Heart right ventricle (tissue), 16 donors: ENCODE measurements at regions of chr11 and their contacts with region 1.

Region 1: DNA sequence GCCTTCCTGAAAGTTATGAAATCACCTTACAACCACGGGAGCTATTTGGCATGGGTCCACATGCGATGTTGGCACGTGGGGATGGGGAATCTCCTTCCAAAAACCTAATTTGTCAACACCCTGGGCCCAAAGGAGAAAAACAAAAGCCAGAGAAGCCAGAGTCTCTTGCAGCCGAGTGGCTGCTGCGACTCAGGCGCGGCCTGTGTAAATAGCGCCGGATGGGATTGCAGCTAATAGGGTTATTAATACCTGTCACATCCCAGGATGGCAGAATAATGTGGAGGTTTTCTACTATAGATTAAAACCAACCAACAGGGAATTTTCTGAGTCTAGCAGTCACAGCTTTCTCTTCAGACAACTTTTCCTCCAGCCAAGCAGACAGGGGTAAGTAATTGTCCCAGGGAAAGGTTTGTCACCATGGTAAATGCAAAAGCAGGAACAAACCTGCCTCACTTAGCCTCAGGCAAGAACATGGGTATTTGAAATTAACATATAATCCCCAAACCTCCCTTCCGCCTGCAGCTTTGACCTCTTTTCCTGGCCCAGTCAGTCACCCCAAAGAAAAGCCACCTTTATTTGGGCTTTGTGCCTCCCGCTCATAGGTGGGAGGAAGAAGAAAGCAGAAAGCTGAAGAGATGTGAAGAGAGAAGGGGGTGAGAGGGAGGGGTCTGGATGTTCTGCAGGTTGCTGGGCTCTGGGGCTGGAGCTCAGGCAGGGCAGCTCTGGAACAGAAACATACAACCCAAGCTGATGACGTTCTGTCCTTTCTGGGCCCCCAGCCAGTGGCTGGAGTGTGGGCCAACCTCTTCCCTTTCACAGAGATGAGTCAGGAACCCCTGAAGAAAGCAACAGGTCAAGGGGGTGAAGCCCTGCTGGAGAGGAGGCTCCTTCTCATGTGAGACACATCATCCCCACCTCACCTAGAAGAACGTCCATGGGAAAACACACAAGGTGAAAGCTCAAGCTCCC is 376.5 kb downstream of the NXPE2 start:
- DNase-seq: peak; percentile 10 to 44
- ATAC-seq: peak in 6 of 8 donors; percentile 38 to 95 (median 86)
- H3K4me3 ChIP-seq: no peak overlapping the region
- H3K27ac ChIP-seq: no peak overlapping the region
- H3K4me1 ChIP-seq: peaks cover 0 to 7% (median 0%) of the 10 kb centered on the region in 9 donors
- H3K27me3 ChIP-seq: peaks cover 0 to 3% (median 0%) of the 10 kb centered on the region in 7 donors
- CTCF ChIP-seq: no peak

Region 2: GRCh38 chr11:115067900-115068530 is 13.2 kb after region 1 on chr11:
- intact Hi-C with region 1: no loop called
- DNase-seq: no peak
- ATAC-seq: no peak
- H3K4me3 ChIP-seq: no peak overlapping the region
- H3K27ac ChIP-seq: no peak overlapping the region
- H3K4me1 ChIP-seq: no peaks in the 10 kb centered on the region
- H3K27me3 ChIP-seq: no peaks in the 10 kb centered on the region
- CTCF ChIP-seq: no peak

Region 3: DNA sequence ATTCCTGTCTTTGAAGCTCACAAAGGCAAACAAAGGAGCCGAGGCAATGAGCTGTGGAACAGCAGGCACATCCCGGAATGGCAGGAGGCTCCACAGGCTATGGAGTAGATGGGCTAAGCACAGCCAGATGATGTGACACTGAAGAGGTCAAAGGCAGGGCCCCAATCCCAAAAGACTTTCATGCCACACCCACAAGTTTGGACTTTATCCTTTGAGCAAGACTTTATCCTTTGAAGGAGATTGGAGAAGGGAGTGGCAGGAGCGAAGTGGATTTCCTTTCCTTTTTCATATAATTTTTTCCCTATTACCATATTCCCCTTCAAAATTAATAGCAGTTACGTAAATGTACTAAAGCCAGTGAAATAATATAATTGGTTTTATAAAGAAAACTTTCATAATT is 69.9 kb after region 1 on chr11:
- intact Hi-C with region 1: loop called in 1 of 10 experiments (anchors 1 kb)
- DNase-seq: no peak
- ATAC-seq: no peak
- H3K4me3 ChIP-seq: no peak overlapping the region
- H3K27ac ChIP-seq: no peak overlapping the region
- H3K4me1 ChIP-seq: no peaks in the 10 kb centered on the region
- H3K27me3 ChIP-seq: peaks cover 0 to 16% (median 0%) of the 10 kb centered on the region in 7 donors
- CTCF ChIP-seq: no peak

Region 4: GRCh38 chr11:116257104-116257503 is 1202.2 kb after region 1 on chr11:
- intact Hi-C with region 1: no loop called
- DNase-seq: no peak
- ATAC-seq: peak in 2 of 8 donors; percentile 20 to 44
- H3K4me3 ChIP-seq: no peak overlapping the region
- H3K27ac ChIP-seq: no peak overlapping the region
- H3K4me1 ChIP-seq: peaks cover 0 to 4% (median 0%) of the 10 kb centered on the region in 9 donors
- H3K27me3 ChIP-seq: peaks cover 0 to 35% (median 11%) of the 10 kb centered on the region in 7 donors
- CTCF ChIP-seq: no peak